ENCODE measurements at regions of chr5 and their contacts with region 1.

Region 1: DNA sequence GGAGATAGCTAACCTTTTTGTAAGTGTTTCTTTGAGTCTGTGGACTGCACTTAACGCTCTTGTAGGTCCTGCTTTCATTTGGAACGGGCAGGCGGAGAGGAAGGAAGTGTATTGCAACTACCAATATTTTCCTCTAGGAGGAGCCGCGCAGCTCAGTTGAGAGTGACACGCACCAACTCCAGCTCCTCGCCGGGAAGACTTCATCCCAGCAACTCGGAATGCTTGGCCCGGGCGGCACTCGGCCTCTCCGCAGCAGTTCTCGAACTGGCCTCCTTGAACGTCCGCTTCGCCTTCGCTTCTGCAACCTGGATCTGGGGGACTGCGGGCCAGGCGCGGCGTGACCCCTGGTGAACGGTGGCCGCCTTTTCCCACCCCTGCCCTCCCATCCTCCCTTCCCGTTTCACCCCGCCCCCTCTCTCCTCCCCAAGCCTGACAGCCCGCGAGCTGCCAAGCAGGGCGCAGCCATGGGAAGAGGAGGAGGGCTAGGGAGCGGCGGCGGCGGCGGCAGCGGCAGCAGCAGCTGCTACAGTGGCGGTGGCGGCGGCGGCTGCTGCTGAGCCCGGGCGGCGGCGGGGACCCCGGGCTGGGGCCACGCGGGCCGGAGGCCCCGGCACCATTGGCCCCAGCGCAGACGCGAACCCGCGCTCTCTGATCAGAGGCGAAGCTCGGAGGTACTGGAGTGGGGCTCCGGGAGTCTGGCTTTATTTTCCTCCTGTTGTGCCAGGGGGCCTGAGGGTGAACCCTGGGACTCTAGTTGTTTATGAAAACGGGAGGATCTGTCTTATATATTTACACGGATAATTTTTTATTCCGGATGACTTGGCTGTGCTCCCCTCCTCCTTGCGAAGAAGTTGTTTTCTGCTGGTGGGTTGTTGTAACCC is at the start of gene GHR:
- DNase-seq: peak; percentile 93
- H3K4me3 Mint-ChIP-seq: no peak within 1 kb of the TSS
- H3K27ac Mint-ChIP-seq: no peak within 1 kb of the TSS
- H3K4me1 Mint-ChIP-seq: no peaks in the 10 kb centered on the region
- H3K27me3 Mint-ChIP-seq: no peaks in the 10 kb centered on the region
- CTCF ChIP-seq: peak; percentile 69
- total RNA-seq, gene GHR: 1.8 and 1.9 TPM in 2 replicates

Region 2: GRCh38 chr5:42467981-42468524 is 44.5 kb after region 1 on chr5:
- CTCF ChIA-PET with region 1: interaction called, 12 read pairs
- POLR2A ChIA-PET with region 1: no interaction called
- intact Hi-C with region 1: no loop called
- DNase-seq: peak; percentile 7
- H3K4me3 Mint-ChIP-seq: no peak overlapping the region
- H3K27ac Mint-ChIP-seq: no peak overlapping the region
- H3K4me1 Mint-ChIP-seq: peaks cover 4% of the 10 kb centered on the region
- H3K27me3 Mint-ChIP-seq: no peaks in the 10 kb centered on the region
- CTCF ChIP-seq: no peak

Region 3: GRCh38 chr5:42502613-42503470 is 79.3 kb after region 1 on chr5:
- CTCF ChIA-PET with region 1: interaction called, 13 read pairs
- POLR2A ChIA-PET with region 1: interaction called, 23 read pairs
- intact Hi-C with region 1: no loop called
- DNase-seq: no peak
- H3K4me3 Mint-ChIP-seq: peak overlapping the region; percentile 16
- H3K27ac Mint-ChIP-seq: peak overlapping the region; percentile 86
- H3K4me1 Mint-ChIP-seq: peaks cover 39% of the 10 kb centered on the region
- H3K27me3 Mint-ChIP-seq: no peaks in the 10 kb centered on the region
- CTCF ChIP-seq: no peak

Region 4: DNA sequence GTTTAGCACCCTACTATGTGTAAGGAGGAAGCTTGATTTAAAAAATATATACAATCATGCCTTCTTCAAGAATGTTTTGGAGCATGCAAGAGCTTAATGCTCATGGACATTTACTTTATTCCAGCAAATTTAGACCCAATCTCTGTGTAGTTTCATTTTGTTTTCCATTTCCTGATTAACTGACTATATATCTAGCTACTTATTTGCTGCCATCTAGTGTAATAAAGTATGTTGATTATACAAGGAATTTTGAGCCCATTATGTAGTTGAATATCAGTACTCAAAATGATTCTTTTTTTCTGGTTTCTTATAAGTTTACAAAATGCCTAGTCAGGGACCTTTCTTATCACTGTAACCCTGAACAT is 233.1 kb after region 1 on chr5:
- CTCF ChIA-PET with region 1: interaction called, 66 read pairs
- POLR2A ChIA-PET with region 1: interaction called, 11 read pairs
- intact Hi-C with region 1: loop called (anchors 1 kb)
- DNase-seq: peak; percentile 18
- H3K4me3 Mint-ChIP-seq: peak overlapping the region; percentile 66
- H3K27ac Mint-ChIP-seq: peak overlapping the region; percentile 25
- H3K4me1 Mint-ChIP-seq: peaks cover 15% of the 10 kb centered on the region
- H3K27me3 Mint-ChIP-seq: no peaks in the 10 kb centered on the region
- CTCF ChIP-seq: peak; percentile 16

Region 5: GRCh38 chr5:42889311-42889933 is 465.9 kb after region 1 on chr5:
- CTCF ChIA-PET with region 1: interaction called, 33 read pairs
- POLR2A ChIA-PET with region 1: no interaction called
- intact Hi-C with region 1: loop called (anchors 1 kb)
- DNase-seq: peak; percentile 88
- H3K4me3 Mint-ChIP-seq: no peak overlapping the region
- H3K27ac Mint-ChIP-seq: no peak overlapping the region
- H3K4me1 Mint-ChIP-seq: no peaks in the 10 kb centered on the region
- H3K27me3 Mint-ChIP-seq: no peaks in the 10 kb centered on the region
- CTCF ChIP-seq: peak; percentile 85